Esophagus muscularis mucosa (tissue), 4 donors: ENCODE measurements at regions of chr14 and their contacts with region 1.

Region 1: GRCh38 chr14:70714055-70714621 is 72.4 kb downstream of the TTC9 start:
- DNase-seq: no peak
- H3K4me3 ChIP-seq: no peak overlapping the region
- H3K27ac ChIP-seq: no peak overlapping the region
- H3K4me1 ChIP-seq: peaks cover 2 to 12% (median 9%) of the 10 kb centered on the region in 4 donors
- H3K27me3 ChIP-seq: peaks cover 0 to 19% (median 0%) of the 10 kb centered on the region in 4 donors
- CTCF ChIP-seq: peak; percentile 49 to 68 (median 58)
- EP300 ChIP-seq: no peak
- POLR2A ChIP-seq: no peak

Region 2: DNA sequence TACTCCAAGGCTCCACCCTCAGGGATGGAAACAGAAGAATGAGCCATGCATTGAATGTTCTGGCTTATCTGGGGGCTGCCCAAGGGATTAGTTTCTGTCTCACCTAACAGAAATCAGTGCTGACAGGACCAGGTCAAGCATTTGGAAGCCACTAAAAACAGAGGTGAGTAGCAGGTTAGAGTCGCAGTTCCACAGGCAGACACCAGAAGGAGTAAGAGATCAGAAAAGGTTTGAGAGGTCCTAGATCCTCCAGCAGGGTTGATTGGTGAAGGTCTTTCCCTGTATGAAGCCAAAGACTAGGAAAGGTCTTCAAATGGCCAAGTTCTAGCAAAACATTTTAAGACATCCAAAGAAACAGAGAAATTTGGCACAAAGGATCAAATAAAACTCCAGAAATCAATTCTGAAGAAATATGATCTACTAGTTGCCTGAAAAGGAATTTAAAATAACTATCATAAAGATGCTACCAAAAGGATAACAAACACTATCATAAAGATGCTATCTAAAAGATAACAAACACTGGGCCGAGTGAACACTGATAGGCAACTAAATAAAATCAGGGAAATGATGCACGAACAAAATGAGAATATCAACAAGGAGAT is 91.9 kb before region 1 on chr14:
- intact Hi-C with region 1: loop called (anchors 10 kb)
- DNase-seq: no peak
- H3K4me3 ChIP-seq: no peak overlapping the region
- H3K27ac ChIP-seq: no peak overlapping the region
- H3K4me1 ChIP-seq: no peaks in the 10 kb centered on the region
- H3K27me3 ChIP-seq: no peaks in the 10 kb centered on the region
- CTCF ChIP-seq: peak; percentile 33 to 48 (median 34)
- EP300 ChIP-seq: no peak
- POLR2A ChIP-seq: no peak

Region 3: DNA sequence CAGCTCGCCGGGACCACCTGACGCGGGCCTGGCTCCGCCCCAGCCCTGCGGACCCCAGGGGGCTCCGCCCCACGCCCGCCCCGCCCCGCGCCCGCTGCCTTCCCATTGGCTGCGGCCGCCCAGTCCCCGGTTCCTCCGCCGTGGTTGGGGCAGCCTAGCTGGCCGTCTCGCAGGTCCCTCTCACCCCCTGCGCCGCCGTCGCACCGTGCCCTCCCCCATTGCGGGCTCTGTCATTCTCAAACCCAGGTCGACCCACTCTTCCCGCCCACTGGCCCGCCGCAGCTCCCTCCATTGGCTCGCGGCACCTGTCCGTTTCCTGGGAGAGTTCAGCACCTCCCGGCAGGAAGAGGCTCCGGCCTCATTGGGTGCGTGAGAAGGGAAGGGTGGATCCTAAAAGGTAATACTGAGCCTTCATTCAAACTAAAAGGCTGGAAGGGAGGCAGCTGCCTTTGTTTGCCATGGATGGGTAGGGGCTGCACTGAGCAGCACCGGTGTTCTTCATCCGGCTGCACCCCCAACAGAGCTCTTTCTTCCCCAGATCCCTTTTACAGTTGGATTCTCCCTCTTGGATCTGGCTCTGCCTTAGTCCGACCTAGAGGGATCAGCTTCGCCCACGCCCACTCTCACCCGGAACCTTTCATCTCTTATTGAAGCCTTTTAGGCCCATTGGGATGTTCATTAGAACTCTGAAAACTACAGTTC is 95.6 kb after region 1 on chr14:
- intact Hi-C with region 1: loop called (anchors 5 kb)
- DNase-seq: no peak
- H3K4me3 ChIP-seq: peak overlapping the region; percentile 76 to 90 (median 82)
- H3K27ac ChIP-seq: peak overlapping the region; percentile 80 to 83 (median 83)
- H3K4me1 ChIP-seq: peaks cover 16 to 27% (median 23%) of the 10 kb centered on the region in 4 donors
- H3K27me3 ChIP-seq: peaks cover 0 to 30% (median 0%) of the 10 kb centered on the region in 4 donors
- CTCF ChIP-seq: no peak
- EP300 ChIP-seq: no peak
- POLR2A ChIP-seq: no peak

Region 4: GRCh38 chr14:70907176-70907995 is 193.2 kb after region 1 on chr14 and contains the start of gene PCNX1:
- intact Hi-C with region 1: no loop called
- DNase-seq: peak; percentile 95
- H3K4me3 ChIP-seq: peak within 1 kb of the TSS; percentile 90 to 100 (median 96)
- H3K27ac ChIP-seq: peak within 1 kb of the TSS; percentile 93 to 95 (median 94)
- H3K4me1 ChIP-seq: peaks cover 47 to 61% (median 51%) of the 10 kb centered on the region in 4 donors
- H3K27me3 ChIP-seq: no peaks in the 10 kb centered on the region
- CTCF ChIP-seq: peak in 2 of 3 experiments; percentile 87 to 89
- EP300 ChIP-seq: no peak
- POLR2A ChIP-seq: no peak
- total RNA-seq, gene PCNX1: 56.3 to 62.5 (median 59.6) TPM

Region 5: DNA sequence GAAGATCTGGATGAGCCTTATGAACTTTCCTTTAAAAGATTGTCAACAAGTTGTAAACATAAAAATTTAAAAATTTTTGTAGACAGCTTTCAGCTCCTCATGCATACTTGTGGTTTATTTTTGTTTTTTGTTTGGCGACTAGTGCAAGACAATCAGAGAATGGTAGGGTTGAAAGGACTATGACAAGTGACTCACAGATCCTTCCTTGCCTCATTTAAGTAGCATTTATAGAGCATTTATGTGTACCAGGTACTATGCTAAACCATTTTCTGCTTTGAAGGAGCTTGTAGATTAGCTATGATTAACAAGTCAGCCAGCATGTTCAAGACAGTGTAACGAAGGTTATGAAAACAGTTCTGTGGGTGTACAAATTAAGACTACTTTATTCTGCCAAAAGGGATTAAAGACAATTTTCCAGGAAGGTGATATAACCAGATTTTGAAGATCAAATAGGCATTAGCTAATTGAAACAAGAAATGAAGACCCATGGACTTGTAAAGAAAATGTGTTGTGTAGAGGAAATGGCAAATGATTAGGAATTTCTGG is 315.2 kb after region 1 on chr14:
- intact Hi-C with region 1: no loop called
- DNase-seq: no peak
- H3K4me3 ChIP-seq: no peak overlapping the region
- H3K27ac ChIP-seq: no peak overlapping the region
- H3K4me1 ChIP-seq: no peaks in the 10 kb centered on the region
- H3K27me3 ChIP-seq: no peaks in the 10 kb centered on the region
- CTCF ChIP-seq: no peak
- EP300 ChIP-seq: no peak
- POLR2A ChIP-seq: no peak